Activated CD4-positive, alpha-beta T cell treated with anti-CD3 and anti-CD28 coated beads for 36 hours (primary cell): ENCODE measurements at regions of chr17 and their contacts with region 1.

Region 1: GRCh38 chr17:61399131-61400057 is at the start of gene TBX2:
- DNase-seq: peak; percentile 18
- ATAC-seq: no peak
- H3K4me3 Mint-ChIP-seq: peak within 1 kb of the TSS; percentile 47
- H3K27ac Mint-ChIP-seq: peak within 1 kb of the TSS; percentile 17
- H3K4me1 Mint-ChIP-seq: peaks cover 37% of the 10 kb centered on the region
- H3K27me3 Mint-ChIP-seq: peaks cover 57% of the 10 kb centered on the region
- total RNA-seq, gene TBX2: not detected

Region 2: GRCh38 chr17:61452301-61453290 is 53.2 kb after region 1 on chr17 and contains the start of gene TBX4:
- CTCF ChIA-PET with region 1: no interaction called
- POLR2A ChIA-PET with region 1: interaction called, 7 read pairs
- intact Hi-C with region 1: loop called in 1 of 2 experiments (anchors 1 kb)
- DNase-seq: peak; percentile 25
- ATAC-seq: peak; percentile 23
- H3K4me3 Mint-ChIP-seq: peak within 1 kb of the TSS; percentile 43
- H3K27ac Mint-ChIP-seq: no peak within 1 kb of the TSS
- H3K4me1 Mint-ChIP-seq: peaks cover 24% of the 10 kb centered on the region
- H3K27me3 Mint-ChIP-seq: peaks cover 47% of the 10 kb centered on the region
- total RNA-seq, gene TBX4: not detected

Region 3: GRCh38 chr17:61766516-61766915 is 367.1 kb after region 1 on chr17:
- CTCF ChIA-PET with region 1: no interaction called
- POLR2A ChIA-PET with region 1: no interaction called
- intact Hi-C with region 1: no loop called
- DNase-seq: no peak
- ATAC-seq: no peak
- H3K4me3 Mint-ChIP-seq: no peak overlapping the region
- H3K27ac Mint-ChIP-seq: no peak overlapping the region
- H3K4me1 Mint-ChIP-seq: no peaks in the 10 kb centered on the region
- H3K27me3 Mint-ChIP-seq: no peaks in the 10 kb centered on the region